Right ventricle myocardium inferior (tissue), 1 donor: ENCODE measurements at regions of chr5 and their contacts with region 1.

Region 1: DNA sequence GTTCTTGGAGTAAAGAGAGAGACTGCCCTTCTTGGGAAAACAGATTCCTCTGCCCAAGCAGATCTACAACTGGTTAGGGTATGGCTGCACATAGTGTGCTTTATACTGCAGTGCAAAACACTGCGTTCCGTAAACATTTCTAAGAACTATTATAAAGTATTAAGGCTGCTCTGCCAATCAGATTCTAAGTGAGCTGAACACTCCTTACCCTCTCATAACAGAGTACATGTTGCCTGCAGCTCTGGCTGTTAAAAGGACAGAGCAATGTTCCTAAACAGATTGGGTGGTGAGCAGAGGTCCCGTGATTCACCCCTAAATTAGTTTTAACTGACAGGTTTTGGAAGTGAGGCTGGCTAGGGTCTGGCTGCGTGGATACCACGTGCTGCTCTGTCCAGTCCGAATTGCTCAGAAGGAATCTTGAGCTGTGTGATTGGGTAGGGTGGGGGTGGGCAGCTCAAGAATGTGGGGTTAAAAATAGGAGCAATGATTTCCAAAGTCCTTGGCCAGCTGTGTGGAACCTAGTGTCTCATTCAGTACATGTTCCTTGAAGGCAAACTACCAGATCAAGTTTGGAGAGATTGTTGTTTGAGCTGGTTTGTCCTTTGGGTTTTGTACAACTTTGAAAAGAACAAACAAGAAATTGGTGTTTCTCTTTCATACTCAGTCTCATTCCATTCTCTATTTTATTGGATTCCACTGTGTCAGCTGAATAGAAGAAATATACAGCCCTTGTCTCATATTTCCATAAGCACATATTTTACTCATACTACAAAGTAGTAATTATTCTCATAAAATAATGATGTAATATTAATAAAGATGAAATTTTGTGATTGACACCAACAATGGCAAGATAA is 497.6 kb upstream of the CD180 start:
- DNase-seq: peak; percentile 71
- ATAC-seq: peak; percentile 96

Region 2: GRCh38 chr5:67493676-67494075 is 200.5 kb before region 1 on chr5:
- intact Hi-C with region 1: loop called (anchors 10 kb)
- DNase-seq: peak; percentile 63
- ATAC-seq: peak; percentile 90

Region 3: GRCh38 chr5:67677422-67677970 is 16.7 kb before region 1 on chr5:
- intact Hi-C with region 1: loop called (anchors 1 kb)
- DNase-seq: no peak
- ATAC-seq: no peak

Region 4: DNA sequence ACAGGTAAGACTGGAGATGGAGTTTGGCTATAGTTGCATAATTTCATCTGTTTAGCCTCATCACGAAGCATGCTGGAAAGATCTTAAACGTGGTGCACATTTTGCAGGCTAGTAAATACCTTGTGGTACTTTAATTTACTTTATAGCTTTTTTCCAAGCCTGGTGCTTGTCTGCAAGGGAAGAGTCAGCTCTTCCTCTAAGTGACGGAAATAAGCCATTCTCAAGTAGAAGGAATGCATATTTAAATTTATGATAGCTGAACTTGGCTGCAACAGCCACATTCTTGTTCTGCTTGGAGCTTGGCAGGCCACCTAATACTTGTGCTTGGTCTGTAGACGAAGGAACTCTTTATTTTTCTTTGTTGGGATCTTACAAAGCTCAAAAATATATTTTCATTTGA is 333.3 kb after region 1 on chr5:
- intact Hi-C with region 1: loop called (anchors 10 kb)
- DNase-seq: no peak
- ATAC-seq: peak; percentile 46

Region 5: GRCh38 chr5:68252673-68253623 is 558.8 kb after region 1 on chr5:
- intact Hi-C with region 1: loop called (anchors 5 kb)
- DNase-seq: no peak
- ATAC-seq: peak; percentile 59